ENCODE measurements at regions of chrX and their contacts with region 1.

Region 1: DNA sequence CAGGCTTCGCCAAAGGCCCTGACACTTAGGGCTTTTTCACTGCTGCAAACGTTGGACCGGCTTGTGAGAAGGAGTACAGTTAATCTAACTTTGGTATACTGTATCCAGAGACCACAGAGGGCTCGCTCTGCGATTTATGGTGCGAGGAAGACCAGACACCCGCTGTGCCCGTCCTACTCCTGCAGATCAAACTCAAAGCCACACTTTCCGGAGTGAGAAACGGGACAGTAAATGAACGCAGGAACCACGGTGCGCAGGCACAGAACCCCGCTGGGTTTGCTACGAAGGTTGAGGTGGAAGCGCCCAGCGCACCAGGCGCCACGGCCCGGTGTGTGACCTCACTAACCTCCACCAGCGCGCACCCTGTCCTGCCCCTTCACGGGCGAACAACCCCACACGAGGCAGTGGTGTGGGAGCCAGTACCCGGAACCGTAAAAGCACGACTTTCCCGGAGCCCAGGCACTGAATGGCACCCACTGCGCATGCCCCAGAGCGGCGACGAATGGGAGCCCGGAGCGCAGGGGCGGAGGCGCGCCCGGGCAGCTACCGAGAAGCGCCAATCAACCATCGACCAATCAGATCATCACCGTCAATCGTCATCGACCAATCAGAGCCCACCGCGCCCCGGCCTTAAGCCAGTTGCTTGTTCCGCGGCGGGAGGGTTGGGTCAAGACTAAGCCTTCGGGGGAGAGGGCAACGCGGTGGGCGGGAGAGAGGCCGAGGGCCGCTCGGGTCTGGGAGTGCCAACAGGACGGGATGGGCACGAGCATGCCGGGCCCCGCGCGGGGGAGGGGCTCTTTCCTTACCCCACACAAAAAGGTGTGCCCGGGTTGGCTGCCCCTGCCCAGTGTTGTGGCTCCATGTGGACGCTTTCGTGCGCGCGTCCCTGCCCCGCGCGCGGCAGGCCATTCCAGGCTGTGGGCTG is 21.3 kb upstream of the WDR45 start:
- DNase-seq: peak; percentile 92
- ATAC-seq: peak; percentile 97
- H3K4me3 Mint-ChIP-seq: peak overlapping the region; percentile 85
- H3K27ac Mint-ChIP-seq: peak overlapping the region; percentile 89
- H3K4me1 Mint-ChIP-seq: peaks cover 7% of the 10 kb centered on the region
- H3K27me3 Mint-ChIP-seq: no peaks in the 10 kb centered on the region

Region 2: DNA sequence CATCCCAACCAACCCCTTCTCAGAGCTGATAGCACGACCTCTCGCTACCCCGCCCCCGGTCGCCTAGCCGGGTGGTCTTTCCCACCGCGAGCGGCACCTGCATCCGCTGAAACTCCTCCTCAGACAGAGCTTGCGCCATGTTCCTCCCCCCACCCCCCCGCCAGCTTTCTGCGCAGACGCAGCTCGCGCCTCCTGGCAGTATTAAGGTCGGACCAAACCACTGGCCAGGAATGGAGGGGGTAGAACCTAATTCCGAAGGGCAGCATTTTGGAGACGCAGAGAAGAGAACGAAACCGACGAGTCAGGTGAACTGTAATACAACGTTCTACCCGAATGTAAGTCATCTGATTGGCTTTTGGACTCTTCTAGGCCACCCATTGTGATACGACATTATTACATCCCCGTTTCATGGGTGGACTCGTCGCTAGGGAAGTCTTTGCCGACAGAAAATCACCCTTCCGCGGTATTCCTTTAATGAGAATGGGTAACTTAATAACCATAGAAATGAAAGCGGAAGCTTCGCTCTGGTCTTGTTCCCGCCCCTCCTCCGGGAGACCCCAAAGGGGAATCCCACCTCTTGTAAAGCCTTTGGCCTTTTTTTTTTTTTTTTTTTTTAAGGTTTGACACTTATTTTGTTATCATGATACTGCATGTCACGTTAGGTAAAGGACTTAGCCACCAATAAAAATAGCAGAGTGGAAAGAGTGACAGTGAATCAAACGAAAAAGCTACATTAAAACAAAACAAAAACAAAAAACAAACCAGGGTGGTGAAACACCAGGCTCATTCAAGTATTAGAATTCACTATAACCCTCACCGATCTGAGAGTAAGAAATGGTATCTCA is 98.7 kb before region 1 on chrX and contains the start of gene GRIPAP1:
- CTCF ChIA-PET with region 1: no interaction called
- POLR2A ChIA-PET with region 1: no interaction called
- intact Hi-C with region 1: loop called in 1 of 2 experiments (anchors 2 kb)
- DNase-seq: peak; percentile 87
- ATAC-seq: peak; percentile 82
- H3K4me3 Mint-ChIP-seq: peak within 1 kb of the TSS; percentile 97
- H3K27ac Mint-ChIP-seq: peak within 1 kb of the TSS; percentile 98
- H3K4me1 Mint-ChIP-seq: peaks cover 34% of the 10 kb centered on the region
- H3K27me3 Mint-ChIP-seq: no peaks in the 10 kb centered on the region
- total RNA-seq, gene GRIPAP1: 57.8 to 63.3 TPM

Region 3: GRCh38 chrX:49079489-49080428 is 21.2 kb before region 1 on chrX and contains the start of gene WDR45:
- CTCF ChIA-PET with region 1: interaction called, 3 read pairs
- POLR2A ChIA-PET with region 1: interaction called, 3 read pairs
- intact Hi-C with region 1: loop called (anchors 1 kb)
- DNase-seq: peak; percentile 84
- ATAC-seq: peak; percentile 84
- H3K4me3 Mint-ChIP-seq: peak within 1 kb of the TSS; percentile 93
- H3K27ac Mint-ChIP-seq: peak within 1 kb of the TSS; percentile 99
- H3K4me1 Mint-ChIP-seq: peaks cover 16% of the 10 kb centered on the region
- H3K27me3 Mint-ChIP-seq: no peaks in the 10 kb centered on the region
- total RNA-seq, gene WDR45: 22.4 to 23.9 TPM

Region 4: DNA sequence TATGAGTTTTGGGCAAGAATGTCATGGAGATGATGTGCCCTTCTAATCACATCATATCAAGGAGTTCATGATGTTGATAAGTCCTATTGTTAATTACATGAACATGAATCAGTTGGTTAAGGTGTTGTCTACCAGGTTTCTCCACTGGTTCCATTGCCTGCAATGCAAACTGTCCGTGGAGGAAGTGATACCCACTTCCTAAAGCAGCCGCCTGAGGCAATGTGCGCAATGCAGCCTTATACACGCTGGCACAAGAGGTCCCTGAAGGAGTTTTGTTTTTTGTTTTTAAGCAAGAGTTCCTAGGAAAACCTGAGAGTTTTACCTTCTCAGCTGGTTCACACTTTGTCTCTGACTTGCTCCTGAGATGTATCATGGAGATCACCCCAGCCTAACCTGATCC is 28.5 kb after region 1 on chrX:
- CTCF ChIA-PET with region 1: no interaction called
- POLR2A ChIA-PET with region 1: no interaction called
- intact Hi-C with region 1: no loop called
- DNase-seq: no peak
- ATAC-seq: no peak
- H3K4me3 Mint-ChIP-seq: no peak overlapping the region
- H3K27ac Mint-ChIP-seq: no peak overlapping the region
- H3K4me1 Mint-ChIP-seq: no peaks in the 10 kb centered on the region
- H3K27me3 Mint-ChIP-seq: no peaks in the 10 kb centered on the region

Region 5: DNA sequence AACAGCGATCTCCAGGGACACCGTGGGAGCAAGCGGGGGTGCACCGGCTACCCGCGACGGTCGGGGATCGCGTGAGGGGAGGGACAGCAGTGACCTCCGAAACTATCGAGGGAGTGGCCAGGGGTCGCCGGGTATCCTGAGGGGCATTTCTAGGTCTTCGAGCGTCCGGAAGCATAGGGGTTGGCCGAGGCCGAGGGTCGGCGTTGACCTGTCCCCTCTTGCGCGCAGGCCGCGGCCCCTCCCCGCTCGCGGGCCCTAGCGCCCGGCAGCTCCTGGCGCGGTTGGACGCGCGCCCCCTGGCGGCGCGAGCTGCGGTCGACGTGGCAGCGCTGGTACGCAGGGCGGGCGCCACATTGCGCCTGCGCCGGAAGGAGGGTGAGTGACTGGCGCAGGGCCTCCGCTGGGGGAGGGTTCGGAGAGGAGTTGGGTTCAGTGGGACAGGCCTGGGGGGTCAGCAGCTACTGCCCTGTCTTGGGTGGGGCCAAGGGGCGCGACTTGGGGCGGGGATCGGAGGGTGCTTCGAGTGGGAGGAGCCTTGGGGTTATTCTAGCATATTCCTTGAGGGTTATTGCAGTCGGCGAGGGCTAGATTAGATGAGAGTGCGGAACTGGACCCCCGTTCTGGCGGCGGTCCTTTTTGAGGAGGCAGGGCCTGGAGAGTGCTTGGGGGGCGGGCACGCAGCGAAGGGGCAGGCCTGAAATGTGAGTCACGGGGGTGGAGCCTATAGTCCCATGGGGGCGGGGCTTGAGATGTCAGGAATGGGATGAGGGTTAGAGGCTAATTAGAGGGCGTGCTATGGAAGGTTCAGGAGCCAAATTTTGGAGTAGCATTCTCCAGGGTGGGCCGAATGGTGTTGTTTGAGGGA is 62.8 kb after region 1 on chrX:
- CTCF ChIA-PET with region 1: no interaction called
- POLR2A ChIA-PET with region 1: no interaction called
- intact Hi-C with region 1: loop called (anchors 1 to 10 kb)
- DNase-seq: peak; percentile 88
- ATAC-seq: peak; percentile 60
- H3K4me3 Mint-ChIP-seq: peak overlapping the region; percentile 77
- H3K27ac Mint-ChIP-seq: peak overlapping the region; percentile 96
- H3K4me1 Mint-ChIP-seq: peaks cover 27% of the 10 kb centered on the region
- H3K27me3 Mint-ChIP-seq: no peaks in the 10 kb centered on the region